Caco-2 (cell line): ENCODE measurements at regions of chr4 and their contacts with region 1.

Region 1: GRCh38 chr4:56742080-56742871 is 61.2 kb upstream of the HOPX start:
- DNase-seq: no peak
- H3K4me3 ChIP-seq: no peak overlapping the region
- H3K4me3 Mint-ChIP-seq: no peak overlapping the region
- H3K27ac Mint-ChIP-seq: peak overlapping the region; percentile 69
- H3K4me1 ChIP-seq: peaks cover 39% of the 10 kb centered on the region
- H3K4me1 Mint-ChIP-seq: peaks cover 31% of the 10 kb centered on the region
- H3K27me3 ChIP-seq: no peaks in the 10 kb centered on the region
- H3K27me3 Mint-ChIP-seq: no peaks in the 10 kb centered on the region
- CTCF ChIP-seq: no peak

Region 2: DNA sequence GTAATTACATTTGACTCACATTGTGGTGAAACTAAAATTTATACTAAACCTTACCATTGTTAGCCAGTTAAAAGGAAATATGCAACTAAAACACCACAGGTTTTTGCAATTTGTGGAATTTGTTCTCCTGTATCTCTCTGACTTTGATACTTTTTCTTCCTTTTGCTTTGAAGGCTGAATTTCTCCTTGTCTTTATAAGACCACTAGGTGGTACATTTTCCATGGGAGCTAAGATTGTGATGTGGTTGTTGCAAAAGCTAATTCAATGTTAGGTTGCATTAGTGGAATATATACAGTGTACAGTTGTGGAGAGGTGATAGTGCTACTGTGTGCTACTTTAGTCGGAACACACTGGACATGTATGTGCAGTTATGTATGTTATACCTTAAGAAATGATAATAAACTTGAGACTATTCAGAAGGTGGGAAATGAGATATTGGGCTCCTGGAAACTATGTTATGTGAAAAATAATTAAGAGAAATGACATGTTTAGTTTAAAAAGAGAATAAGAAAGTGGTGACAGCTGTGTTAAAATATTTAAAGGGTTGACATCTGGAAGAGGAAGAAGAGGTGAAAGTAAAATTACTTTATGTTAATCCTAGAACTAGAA is 166.4 kb before region 1 on chr4:
- CTCF ChIA-PET with region 1: no interaction called
- POLR2A ChIA-PET with region 1: no interaction called
- intact Hi-C with region 1: no loop called
- DNase-seq: no peak
- H3K4me3 ChIP-seq: no peak overlapping the region
- H3K4me3 Mint-ChIP-seq: no peak overlapping the region
- H3K27ac Mint-ChIP-seq: no peak overlapping the region
- H3K4me1 ChIP-seq: no peaks in the 10 kb centered on the region
- H3K4me1 Mint-ChIP-seq: no peaks in the 10 kb centered on the region
- H3K27me3 ChIP-seq: no peaks in the 10 kb centered on the region
- H3K27me3 Mint-ChIP-seq: no peaks in the 10 kb centered on the region
- CTCF ChIP-seq: peak; percentile 31 to 46

Region 3: DNA sequence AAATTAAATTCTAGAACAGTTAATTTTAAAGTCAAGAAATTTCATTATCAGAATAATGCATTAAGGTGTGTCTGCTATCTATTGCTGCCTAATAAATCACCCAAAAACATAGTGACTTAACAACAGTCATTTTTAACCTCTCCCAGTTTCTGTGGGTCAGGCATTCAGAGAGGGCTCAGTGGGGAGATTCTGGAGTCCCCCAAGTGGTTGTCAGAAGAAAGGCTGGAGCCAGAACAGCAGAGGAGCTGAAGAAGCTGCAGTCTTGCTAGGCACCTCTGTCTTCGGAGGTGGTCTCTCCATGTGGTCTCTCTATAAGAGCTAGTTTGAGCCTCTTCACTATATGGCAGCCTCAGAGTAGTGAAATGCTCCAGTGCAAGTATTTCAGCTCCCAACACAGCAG is 51.9 kb before region 1 on chr4:
- CTCF ChIA-PET with region 1: no interaction called
- POLR2A ChIA-PET with region 1: no interaction called
- intact Hi-C with region 1: no loop called
- DNase-seq: no peak
- H3K4me3 ChIP-seq: no peak overlapping the region
- H3K4me3 Mint-ChIP-seq: no peak overlapping the region
- H3K27ac Mint-ChIP-seq: no peak overlapping the region
- H3K4me1 ChIP-seq: no peaks in the 10 kb centered on the region
- H3K4me1 Mint-ChIP-seq: no peaks in the 10 kb centered on the region
- H3K27me3 ChIP-seq: no peaks in the 10 kb centered on the region
- H3K27me3 Mint-ChIP-seq: no peaks in the 10 kb centered on the region
- CTCF ChIP-seq: no peak

Region 4: GRCh38 chr4:56712049-56712448 is 30.2 kb before region 1 on chr4:
- CTCF ChIA-PET with region 1: no interaction called
- POLR2A ChIA-PET with region 1: no interaction called
- intact Hi-C with region 1: no loop called
- DNase-seq: no peak
- H3K4me3 ChIP-seq: no peak overlapping the region
- H3K4me3 Mint-ChIP-seq: no peak overlapping the region
- H3K27ac Mint-ChIP-seq: no peak overlapping the region
- H3K4me1 ChIP-seq: no peaks in the 10 kb centered on the region
- H3K4me1 Mint-ChIP-seq: no peaks in the 10 kb centered on the region
- H3K27me3 ChIP-seq: no peaks in the 10 kb centered on the region
- H3K27me3 Mint-ChIP-seq: peaks cover 5% of the 10 kb centered on the region
- CTCF ChIP-seq: no peak

Region 5: GRCh38 chr4:56757821-56758411 is 15.6 kb after region 1 on chr4:
- CTCF ChIA-PET with region 1: no interaction called
- POLR2A ChIA-PET with region 1: no interaction called
- intact Hi-C with region 1: loop called (anchors 1 kb)
- DNase-seq: peak; percentile 77 to 86
- H3K4me3 ChIP-seq: no peak overlapping the region
- H3K4me3 Mint-ChIP-seq: peak overlapping the region; percentile 58
- H3K27ac Mint-ChIP-seq: peak overlapping the region; percentile 88
- H3K4me1 ChIP-seq: peaks cover 24% of the 10 kb centered on the region
- H3K4me1 Mint-ChIP-seq: peaks cover 35% of the 10 kb centered on the region
- H3K27me3 ChIP-seq: no peaks in the 10 kb centered on the region
- H3K27me3 Mint-ChIP-seq: no peaks in the 10 kb centered on the region
- CTCF ChIP-seq: no peak

Region 6: DNA sequence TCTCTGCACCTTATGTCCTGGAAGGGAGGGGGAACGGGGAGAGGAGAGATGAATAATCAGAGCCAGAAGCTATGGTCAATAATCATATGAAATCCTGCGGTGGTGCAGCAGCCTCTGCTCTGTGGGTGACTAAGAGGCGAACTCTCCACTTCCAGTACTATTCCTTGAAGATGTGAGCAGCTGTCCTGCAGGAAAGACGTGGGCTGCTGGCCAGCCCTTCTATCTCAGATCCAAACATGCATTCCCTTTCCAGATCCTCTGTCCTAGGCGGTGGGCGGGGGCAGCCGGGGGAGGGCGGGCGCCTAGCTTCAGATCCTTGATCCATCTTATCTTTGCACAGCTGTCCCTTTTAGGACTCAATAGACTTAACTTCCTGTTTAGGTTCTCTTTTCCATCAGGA is 44.7 kb after region 1 on chr4:
- CTCF ChIA-PET with region 1: no interaction called
- POLR2A ChIA-PET with region 1: no interaction called
- intact Hi-C with region 1: loop called (anchors 2 kb)
- DNase-seq: peak; percentile 31 to 50
- H3K4me3 ChIP-seq: no peak overlapping the region
- H3K4me3 Mint-ChIP-seq: peak overlapping the region; percentile 22
- H3K27ac Mint-ChIP-seq: no peak overlapping the region
- H3K4me1 ChIP-seq: peaks cover 10% of the 10 kb centered on the region; the same call in 1 of the 2 replicates
- H3K4me1 Mint-ChIP-seq: peaks cover 21% of the 10 kb centered on the region
- H3K27me3 ChIP-seq: no peaks in the 10 kb centered on the region
- H3K27me3 Mint-ChIP-seq: no peaks in the 10 kb centered on the region
- CTCF ChIP-seq: no peak

Region 7: GRCh38 chr4:56843421-56843899 is 101.2 kb after region 1 on chr4:
- CTCF ChIA-PET with region 1: no interaction called
- POLR2A ChIA-PET with region 1: no interaction called
- intact Hi-C with region 1: no loop called
- DNase-seq: no peak
- H3K4me3 ChIP-seq: no peak overlapping the region
- H3K4me3 Mint-ChIP-seq: no peak overlapping the region
- H3K27ac Mint-ChIP-seq: no peak overlapping the region
- H3K4me1 ChIP-seq: no peaks in the 10 kb centered on the region
- H3K4me1 Mint-ChIP-seq: no peaks in the 10 kb centered on the region
- H3K27me3 ChIP-seq: no peaks in the 10 kb centered on the region
- H3K27me3 Mint-ChIP-seq: no peaks in the 10 kb centered on the region
- CTCF ChIP-seq: no peak